Transverse colon (tissue), 4 donors: ENCODE measurements at regions of chr6 and their contacts with region 1.

Region 1: DNA sequence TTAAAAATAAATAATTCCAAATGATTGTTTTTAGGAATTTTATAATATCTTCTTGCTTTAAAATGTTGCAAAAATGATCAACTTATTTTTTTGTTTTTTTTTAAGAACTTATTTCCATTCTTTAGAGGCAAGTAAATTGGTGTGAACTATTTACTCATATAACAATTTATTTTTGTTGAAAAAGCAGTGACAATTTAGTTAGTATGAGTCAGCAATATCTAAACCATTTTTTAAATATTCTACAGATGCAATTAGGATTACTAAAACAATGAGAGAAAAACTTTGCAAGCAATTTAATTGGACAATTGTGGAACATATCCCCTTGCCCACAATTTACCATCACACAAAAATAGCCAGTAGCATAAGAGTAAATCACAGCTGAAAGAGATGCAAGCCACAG is 319.5 kb downstream of the MEI4 start:
- DNase-seq: no peak
- H3K4me3 ChIP-seq: no peak overlapping the region
- H3K27ac ChIP-seq: no peak overlapping the region
- H3K4me1 ChIP-seq: no peaks in the 10 kb centered on the region
- H3K27me3 ChIP-seq: no peaks in the 10 kb centered on the region
- CTCF ChIP-seq: no peak
- EP300 ChIP-seq: no peak
- POLR2A ChIP-seq: no peak

Region 2: DNA sequence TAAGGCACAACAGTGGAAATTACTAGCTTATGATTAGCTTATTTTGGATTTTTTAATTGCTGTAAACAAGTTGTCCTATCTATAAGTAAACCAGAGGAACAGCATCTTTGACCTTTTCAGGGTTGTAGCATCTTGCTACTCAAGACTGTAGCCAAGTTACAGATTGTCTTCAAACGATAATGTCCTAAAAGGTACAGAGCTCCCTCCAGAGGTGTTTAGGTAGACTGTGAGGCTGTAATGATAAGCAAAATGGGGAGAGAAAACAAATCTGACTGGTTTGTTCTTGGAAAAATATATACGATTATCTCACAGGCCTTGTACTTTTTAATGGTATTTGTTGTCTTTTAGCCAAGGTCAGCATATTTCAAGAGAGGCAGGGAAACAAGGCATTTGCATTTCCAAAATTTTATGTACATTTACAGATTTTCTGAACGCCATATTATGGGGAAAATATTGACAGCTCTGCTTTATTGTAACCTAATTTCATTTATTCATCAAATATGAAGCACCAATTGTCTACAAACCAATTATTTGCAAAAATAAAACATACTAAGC is 46.1 kb before region 1 on chr6:
- in situ Hi-C with region 1: no loop called
- intact Hi-C with region 1: no loop called
- DNase-seq: no peak
- H3K4me3 ChIP-seq: no peak overlapping the region
- H3K27ac ChIP-seq: no peak overlapping the region
- H3K4me1 ChIP-seq: no peaks in the 10 kb centered on the region
- H3K27me3 ChIP-seq: no peaks in the 10 kb centered on the region
- CTCF ChIP-seq: peak in 1 of 5 experiments; percentile 15
- EP300 ChIP-seq: no peak
- POLR2A ChIP-seq: no peak

Region 3: GRCh38 chr6:78010130-78010529 is 37.8 kb after region 1 on chr6:
- in situ Hi-C with region 1: no loop called
- intact Hi-C with region 1: loop called (anchors 1 kb)
- DNase-seq: no peak
- H3K4me3 ChIP-seq: no peak overlapping the region
- H3K27ac ChIP-seq: no peak overlapping the region
- H3K4me1 ChIP-seq: no peaks in the 10 kb centered on the region
- H3K27me3 ChIP-seq: no peaks in the 10 kb centered on the region
- CTCF ChIP-seq: no peak
- EP300 ChIP-seq: no peak
- POLR2A ChIP-seq: no peak